ENCODE measurements at regions of chr1 and their contacts with region 1.

Region 1: GRCh38 chr1:236603991-236604904 is at the start of gene HEATR1:
- DNase-seq: peak; percentile 91
- ATAC-seq: peak; percentile 94
- H3K4me3 ChIP-seq: peak within 1 kb of the TSS; percentile 48 to 75
- H3K27ac ChIP-seq: peak within 1 kb of the TSS; percentile 77
- H3K4me1 ChIP-seq: peaks cover 7 to 18% of the 10 kb centered on the region in 2 experiments; a peak in 3 of 4 replicates
- H3K27me3 ChIP-seq: no peaks in the 10 kb centered on the region
- CTCF ChIP-seq: no peak
- POLR2A ChIP-seq: peak; percentile 75
- RAD21 ChIP-seq: no peak
- total RNA-seq, gene HEATR1: 68.3 TPM

Region 2: GRCh38 chr1:236753516-236753915 is 149.3 kb after region 1 on chr1:
- CTCF ChIA-PET with region 1: interaction called, 6 read pairs
- POLR2A ChIA-PET with region 1: no interaction called
- RAD21 ChIA-PET with region 1: no interaction called
- intact Hi-C with region 1: loop called (anchors 1 kb)
- DNase-seq: peak; percentile 56
- ATAC-seq: peak; percentile 100
- H3K4me3 ChIP-seq: no peak overlapping the region
- H3K27ac ChIP-seq: no peak overlapping the region
- H3K4me1 ChIP-seq: no peaks in the 10 kb centered on the region
- H3K27me3 ChIP-seq: no peaks in the 10 kb centered on the region
- CTCF ChIP-seq: peak; percentile 42 to 55 (median 43); a peak in 5 of 6 replicates
- POLR2A ChIP-seq: no peak
- RAD21 ChIP-seq: peak; percentile 73

Region 3: GRCh38 chr1:236795035-236795756 is 190.9 kb after region 1 on chr1 and contains the start of gene MTR:
- CTCF ChIA-PET with region 1: interaction called, 7 read pairs
- POLR2A ChIA-PET with region 1: no interaction called
- RAD21 ChIA-PET with region 1: no interaction called
- intact Hi-C with region 1: loop called (anchors 1 kb)
- DNase-seq: peak; percentile 97
- ATAC-seq: peak; percentile 98
- H3K4me3 ChIP-seq: peak within 1 kb of the TSS; percentile 86 to 88
- H3K27ac ChIP-seq: peak within 1 kb of the TSS; percentile 88
- H3K4me1 ChIP-seq: peaks cover 6 to 13% of the 10 kb centered on the region in 2 experiments
- H3K27me3 ChIP-seq: no peaks in the 10 kb centered on the region
- CTCF ChIP-seq: no peak
- POLR2A ChIP-seq: peak; percentile 92
- RAD21 ChIP-seq: no peak
- total RNA-seq, gene MTR: 24.6 TPM

Region 4: DNA sequence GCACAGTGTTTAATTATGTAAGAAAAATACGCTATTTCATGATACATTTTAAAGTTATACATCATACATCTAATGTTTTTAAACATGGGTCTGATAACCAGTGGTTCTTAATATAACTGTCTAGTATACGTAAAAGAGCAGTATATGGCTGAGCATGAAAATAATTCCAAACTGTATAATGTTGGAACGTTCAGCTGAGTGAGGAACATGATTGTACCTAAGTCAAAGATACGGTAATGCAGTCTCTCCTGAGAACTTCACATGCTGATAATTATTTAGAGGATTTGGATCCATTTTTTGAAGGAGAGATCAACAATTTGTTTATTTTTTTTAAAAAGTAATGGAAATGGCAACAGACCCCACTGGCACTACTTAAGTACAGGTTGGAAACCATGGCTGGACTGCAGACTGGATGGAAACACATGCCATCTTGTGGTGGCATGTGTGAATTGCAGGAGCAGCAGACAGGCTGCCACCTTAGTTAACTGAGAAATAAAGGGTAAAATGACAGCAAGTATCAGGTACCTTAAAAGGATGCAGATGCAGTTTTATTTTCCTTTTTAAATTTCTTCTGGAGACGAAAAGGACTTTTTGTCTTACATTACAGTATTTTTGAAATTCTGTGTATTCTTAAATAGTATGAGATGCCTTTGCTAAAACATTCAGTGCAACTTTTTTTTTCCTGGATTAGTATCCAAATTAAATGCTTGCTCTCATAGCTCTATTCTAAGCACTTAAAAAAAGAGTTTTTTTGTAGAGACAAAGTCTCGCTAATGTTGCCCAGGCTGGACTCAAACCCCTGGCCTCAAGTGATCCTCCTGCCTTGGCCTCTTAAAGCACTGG is 264.6 kb after region 1 on chr1:
- CTCF ChIA-PET with region 1: interaction called, 4 read pairs
- POLR2A ChIA-PET with region 1: no interaction called
- RAD21 ChIA-PET with region 1: no interaction called
- intact Hi-C with region 1: loop called (anchors 1 kb)
- DNase-seq: peak; percentile 51
- ATAC-seq: peak; percentile 95
- H3K4me3 ChIP-seq: no peak overlapping the region
- H3K27ac ChIP-seq: no peak overlapping the region
- H3K4me1 ChIP-seq: no peaks in the 10 kb centered on the region
- H3K27me3 ChIP-seq: no peaks in the 10 kb centered on the region
- CTCF ChIP-seq: peak; percentile 71 to 96 (median 93); a peak in 5 of 6 replicates
- POLR2A ChIP-seq: no peak
- RAD21 ChIP-seq: peak; percentile 76

Region 5: GRCh38 chr1:237124856-237125462 is 520.7 kb after region 1 on chr1:
- CTCF ChIA-PET with region 1: no interaction called
- POLR2A ChIA-PET with region 1: no interaction called
- RAD21 ChIA-PET with region 1: no interaction called
- intact Hi-C with region 1: loop called (anchors 5 kb)
- DNase-seq: peak; percentile 8
- ATAC-seq: peak; percentile 53
- H3K4me3 ChIP-seq: no peak overlapping the region
- H3K27ac ChIP-seq: no peak overlapping the region
- H3K4me1 ChIP-seq: no peaks in the 10 kb centered on the region
- H3K27me3 ChIP-seq: no peaks in the 10 kb centered on the region
- CTCF ChIP-seq: peak; percentile 35 to 80 (median 67); a peak in 5 of 6 replicates
- POLR2A ChIP-seq: no peak
- RAD21 ChIP-seq: peak; percentile 39

Region 6: GRCh38 chr1:237386362-237387143 is 782.3 kb after region 1 on chr1:
- CTCF ChIA-PET with region 1: interaction called, 18 read pairs
- POLR2A ChIA-PET with region 1: no interaction called
- RAD21 ChIA-PET with region 1: no interaction called
- intact Hi-C with region 1: loop called (anchors 1 kb)
- DNase-seq: peak; percentile 7
- ATAC-seq: no peak; the same call in 1 of the 2 replicates
- H3K4me3 ChIP-seq: no peak overlapping the region
- H3K27ac ChIP-seq: no peak overlapping the region
- H3K4me1 ChIP-seq: no peaks in the 10 kb centered on the region
- H3K27me3 ChIP-seq: no peaks in the 10 kb centered on the region
- CTCF ChIP-seq: peak; percentile 30 to 67 (median 48); a peak in 5 of 6 replicates
- POLR2A ChIP-seq: no peak
- RAD21 ChIP-seq: peak; percentile 64

Region 7: DNA sequence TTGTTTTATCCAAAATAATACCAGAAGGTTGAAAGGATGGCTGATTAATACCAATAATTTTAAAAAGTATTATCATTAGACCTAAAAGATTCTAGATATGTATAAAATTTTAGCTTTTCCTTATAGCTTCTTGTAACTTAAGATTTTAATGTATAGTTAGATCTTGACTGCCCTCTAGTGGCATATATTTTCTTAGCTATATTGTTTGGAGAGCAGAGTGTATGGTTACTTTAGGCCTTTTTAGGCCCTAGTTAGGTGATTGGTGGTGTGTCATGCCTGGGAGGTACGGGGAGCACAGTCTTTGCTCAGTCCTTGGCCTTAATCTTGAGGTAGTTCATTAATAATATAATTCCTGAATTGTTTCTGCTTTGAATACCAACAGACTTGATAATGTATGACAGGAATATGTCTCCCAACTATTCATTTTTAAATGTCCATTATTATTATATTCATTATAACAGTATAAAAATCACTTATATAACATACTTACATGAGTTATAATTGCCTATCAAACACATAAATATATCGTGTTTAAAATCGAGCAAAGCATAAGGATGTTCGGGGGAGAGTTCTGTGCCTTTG is 958.1 kb after region 1 on chr1:
- CTCF ChIA-PET with region 1: interaction called, 9 read pairs
- POLR2A ChIA-PET with region 1: no interaction called
- RAD21 ChIA-PET with region 1: no interaction called
- intact Hi-C with region 1: loop called (anchors 1 kb)
- DNase-seq: no peak
- ATAC-seq: peak; percentile 67
- H3K4me3 ChIP-seq: no peak overlapping the region
- H3K27ac ChIP-seq: no peak overlapping the region
- H3K4me1 ChIP-seq: no peaks in the 10 kb centered on the region
- H3K27me3 ChIP-seq: no peaks in the 10 kb centered on the region
- CTCF ChIP-seq: peak; percentile 23 to 62 (median 39); a peak in 5 of 6 replicates
- POLR2A ChIP-seq: no peak
- RAD21 ChIP-seq: peak; percentile 47